Right ventricle myocardium superior (tissue), 1 donor: ENCODE measurements at regions of chr13 and their contacts with region 1.

Region 1: GRCh38 chr13:68927387-68928026 is 1180.1 kb upstream of the ATXN8OS start:
- DNase-seq: no peak
- ATAC-seq: no peak

Region 2: DNA sequence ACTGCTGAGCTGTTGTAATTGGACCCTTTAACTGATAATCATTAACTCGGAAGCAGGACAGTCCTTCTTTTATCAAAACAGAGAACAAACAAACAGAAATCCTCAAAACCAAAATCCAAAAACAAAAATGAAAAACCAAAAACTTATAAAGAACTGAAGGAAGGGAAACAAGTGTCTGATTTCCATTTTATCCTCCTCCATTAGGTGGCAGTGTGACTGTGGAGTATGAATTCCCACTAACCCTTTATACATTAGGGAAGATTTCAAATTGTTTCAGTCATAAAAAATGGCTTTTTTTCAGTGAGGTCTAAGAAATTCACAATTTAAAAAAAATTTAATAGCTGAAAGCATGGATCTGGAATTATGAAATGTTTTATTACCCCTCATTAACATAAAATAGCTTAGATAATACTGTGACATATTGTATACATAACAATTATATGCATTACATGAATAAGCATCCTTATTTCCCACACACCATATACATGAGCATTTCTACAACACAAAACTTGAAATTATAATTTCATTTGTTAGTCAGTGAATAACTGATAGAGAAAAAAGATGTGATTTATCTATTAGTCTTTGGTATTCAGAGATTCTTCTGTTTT is 623.1 kb before region 1 on chr13:
- intact Hi-C with region 1: loop called (anchors 5 kb)
- DNase-seq: no peak
- ATAC-seq: no peak

Region 3: GRCh38 chr13:68715651-68716050 is 211.9 kb before region 1 on chr13:
- intact Hi-C with region 1: no loop called
- DNase-seq: no peak
- ATAC-seq: no peak

Region 4: GRCh38 chr13:68727165-68727564 is 200.3 kb before region 1 on chr13:
- intact Hi-C with region 1: no loop called
- DNase-seq: no peak
- ATAC-seq: no peak

Region 5: GRCh38 chr13:68970532-68970931 is 43.0 kb after region 1 on chr13:
- intact Hi-C with region 1: no loop called
- DNase-seq: no peak
- ATAC-seq: no peak